Testis (tissue), 5 donors: ENCODE measurements at regions of chr15 and their contacts with region 1.

Region 1: DNA sequence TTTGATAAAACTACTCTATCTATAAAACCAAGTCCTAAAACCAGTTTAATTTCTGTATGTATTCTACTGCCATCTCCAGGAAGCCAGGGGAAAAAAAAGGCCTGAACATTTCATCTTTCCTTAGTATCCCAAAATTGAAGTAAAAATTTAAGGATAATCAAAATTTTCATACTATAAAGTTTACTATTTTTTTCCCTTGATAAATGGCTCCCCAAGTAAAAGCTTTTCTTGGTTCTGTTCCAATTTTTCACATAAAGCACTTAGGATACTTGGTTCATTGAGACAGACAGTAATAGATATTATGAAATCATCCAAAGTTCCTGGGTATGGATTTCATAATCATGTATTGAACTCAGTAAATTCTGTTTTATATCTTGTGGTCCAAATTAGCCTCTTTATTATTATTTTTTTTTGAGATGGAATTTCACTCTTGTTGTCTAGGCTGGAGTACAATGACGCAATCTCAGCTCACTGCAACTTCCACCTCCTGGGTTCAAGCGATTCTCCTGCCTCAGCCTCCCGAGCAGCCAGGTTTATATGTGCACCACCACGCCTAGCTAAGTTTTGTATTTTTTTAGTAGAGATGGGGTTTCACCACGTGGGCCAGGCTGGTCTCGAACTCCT is 34.5 kb downstream of the ICE2 start:
- DNase-seq: no peak
- H3K4me3 ChIP-seq: no peak overlapping the region
- H3K27ac ChIP-seq: no peak overlapping the region
- H3K4me1 ChIP-seq: no peaks in the 10 kb centered on the region
- H3K27me3 ChIP-seq: no peaks in the 10 kb centered on the region
- CTCF ChIP-seq: peak in 2 of 3 experiments; percentile 10 to 50
- POLR2A ChIP-seq: no peak

Region 2: GRCh38 chr15:60362321-60363086 is 81.9 kb before region 1 on chr15:
- intact Hi-C with region 1: loop called (anchors 5 kb)
- DNase-seq: no peak
- H3K4me3 ChIP-seq: no peak overlapping the region
- H3K27ac ChIP-seq: peak overlapping the region in 1 of 2 donors; percentile 24
- H3K4me1 ChIP-seq: peaks cover 15% of the 10 kb centered on the region
- H3K27me3 ChIP-seq: no peaks in the 10 kb centered on the region
- CTCF ChIP-seq: no peak
- POLR2A ChIP-seq: no peak

Region 3: GRCh38 chr15:60374628-60375081 is 69.7 kb before region 1 on chr15:
- intact Hi-C with region 1: no loop called
- DNase-seq: peak; percentile 37
- H3K4me3 ChIP-seq: no peak overlapping the region
- H3K27ac ChIP-seq: peak overlapping the region; percentile 39 to 43
- H3K4me1 ChIP-seq: peaks cover 23% of the 10 kb centered on the region
- H3K27me3 ChIP-seq: no peaks in the 10 kb centered on the region
- CTCF ChIP-seq: no peak
- POLR2A ChIP-seq: no peak